CD4-positive, alpha-beta T cell (primary cell): ENCODE measurements at regions of chr22 and their contacts with region 1.

Region 1: GRCh38 chr22:32202539-32203180 is 2.2 kb downstream of the RFPL2 start:
- DNase-seq: peak in 6 of 14 experiments; percentile 16 to 64 (median 45)
- ATAC-seq: no peak
- H3K4me3 ChIP-seq: peak overlapping the region; percentile 58
- H3K4me3 Mint-ChIP-seq: peak overlapping the region; percentile 89
- H3K27ac ChIP-seq: no peak overlapping the region
- H3K27ac Mint-ChIP-seq: peak overlapping the region; percentile 52
- H3K4me1 ChIP-seq: peaks cover 70% of the 10 kb centered on the region
- H3K4me1 Mint-ChIP-seq: peaks cover 54% of the 10 kb centered on the region
- H3K27me3 ChIP-seq: peaks cover 9% of the 10 kb centered on the region in 2 experiments
- H3K27me3 Mint-ChIP-seq: peaks cover 31% of the 10 kb centered on the region
- CTCF ChIP-seq: peak; percentile 35

Region 2: DNA sequence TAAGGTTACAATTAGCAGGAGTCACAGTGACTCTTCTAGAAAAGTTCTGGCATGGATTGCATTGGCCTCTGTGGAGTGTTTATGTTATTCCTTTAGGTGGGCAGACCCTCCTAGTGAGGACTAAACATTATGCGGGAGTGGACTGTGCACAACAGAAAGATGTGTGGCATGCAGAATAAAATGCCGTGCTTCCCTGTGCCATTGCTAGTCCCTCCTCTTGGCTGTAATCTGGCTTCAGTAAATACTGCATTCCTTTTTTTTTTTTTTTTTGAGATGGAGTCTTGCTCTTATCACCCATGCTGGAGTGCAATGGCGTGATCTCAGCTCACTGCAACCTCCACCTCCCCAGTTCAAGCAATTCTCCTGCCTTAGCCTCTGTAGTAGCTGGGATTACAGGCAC is 114.6 kb before region 1 on chr22:
- CTCF ChIA-PET with region 1: no interaction called
- POLR2A ChIA-PET with region 1: no interaction called
- intact Hi-C with region 1: no loop called
- DNase-seq: no peak
- ATAC-seq: no peak
- H3K4me3 ChIP-seq: no peak overlapping the region
- H3K4me3 Mint-ChIP-seq: no peak overlapping the region
- H3K27ac ChIP-seq: no peak overlapping the region
- H3K27ac Mint-ChIP-seq: no peak overlapping the region
- H3K4me1 ChIP-seq: no peaks in the 10 kb centered on the region
- H3K4me1 Mint-ChIP-seq: no peaks in the 10 kb centered on the region
- H3K27me3 ChIP-seq: no peaks in the 10 kb centered on the region
- H3K27me3 Mint-ChIP-seq: peaks cover 18% of the 10 kb centered on the region
- CTCF ChIP-seq: no peak

Region 3: GRCh38 chr22:32265882-32266767 is 63.5 kb after region 1 on chr22:
- CTCF ChIA-PET with region 1: interaction called, 4 read pairs
- POLR2A ChIA-PET with region 1: no interaction called
- intact Hi-C with region 1: loop called in 1 of 2 experiments (anchors 5 kb)
- DNase-seq: peak; percentile 40 to 81 (median 56)
- ATAC-seq: peak; percentile 66
- H3K4me3 ChIP-seq: no peak overlapping the region
- H3K4me3 Mint-ChIP-seq: no peak overlapping the region
- H3K27ac ChIP-seq: no peak overlapping the region
- H3K27ac Mint-ChIP-seq: no peak overlapping the region
- H3K4me1 ChIP-seq: peaks cover 4% of the 10 kb centered on the region
- H3K4me1 Mint-ChIP-seq: peaks cover 10% of the 10 kb centered on the region
- H3K27me3 ChIP-seq: no peaks in the 10 kb centered on the region
- H3K27me3 Mint-ChIP-seq: peaks cover 9% of the 10 kb centered on the region
- CTCF ChIP-seq: peak; percentile 86